WTC11 (cell line): ENCODE measurements at regions of chr11 and their contacts with region 1.

Region 1: GRCh38 chr11:32231905-32232493 is 141.1 kb downstream of the RCN1 start:
- DNase-seq: peak; percentile 64
- ATAC-seq: peak; percentile 96
- H3K4me3 Mint-ChIP-seq: no peak overlapping the region
- H3K27ac Mint-ChIP-seq: no peak overlapping the region
- H3K4me1 Mint-ChIP-seq: no peaks in the 10 kb centered on the region
- H3K27me3 Mint-ChIP-seq: no peaks in the 10 kb centered on the region
- CTCF ChIP-seq: peak; percentile 56

Region 2: GRCh38 chr11:32154275-32154674 is 77.7 kb before region 1 on chr11:
- CTCF ChIA-PET with region 1: no interaction called
- POLR2A ChIA-PET with region 1: no interaction called
- DNase-seq: no peak
- ATAC-seq: peak; percentile 28
- H3K4me3 Mint-ChIP-seq: no peak overlapping the region
- H3K27ac Mint-ChIP-seq: no peak overlapping the region
- H3K4me1 Mint-ChIP-seq: peaks cover 3% of the 10 kb centered on the region
- H3K27me3 Mint-ChIP-seq: peaks cover 2% of the 10 kb centered on the region
- CTCF ChIP-seq: no peak

Region 3: GRCh38 chr11:32176223-32176934 is 55.6 kb before region 1 on chr11:
- CTCF ChIA-PET with region 1: interaction called, 16 read pairs
- POLR2A ChIA-PET with region 1: no interaction called
- DNase-seq: peak; percentile 88
- ATAC-seq: peak; percentile 65
- H3K4me3 Mint-ChIP-seq: no peak overlapping the region
- H3K27ac Mint-ChIP-seq: no peak overlapping the region
- H3K4me1 Mint-ChIP-seq: peaks cover 15% of the 10 kb centered on the region
- H3K27me3 Mint-ChIP-seq: no peaks in the 10 kb centered on the region
- CTCF ChIP-seq: peak; percentile 84

Region 4: DNA sequence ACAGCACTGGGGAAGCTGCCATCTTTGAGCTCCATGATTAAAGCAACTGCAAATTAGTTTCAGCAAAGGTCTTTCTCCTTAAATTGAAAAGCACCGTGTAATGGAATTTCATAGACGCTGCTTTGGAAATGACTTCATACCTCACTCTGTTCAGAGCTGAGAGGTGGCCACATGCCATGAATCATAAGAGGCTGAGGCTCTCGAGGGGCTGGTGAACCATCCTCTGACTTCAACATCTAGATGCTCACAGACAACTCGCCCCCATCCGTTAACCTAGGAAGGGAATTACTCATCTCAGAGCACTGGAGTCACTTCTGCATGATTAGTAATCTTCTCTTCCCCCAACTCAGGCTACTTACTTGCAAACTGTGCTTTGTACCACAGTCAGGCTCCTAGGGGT is 18.8 kb before region 1 on chr11:
- CTCF ChIA-PET with region 1: interaction called, 10 read pairs
- POLR2A ChIA-PET with region 1: no interaction called
- DNase-seq: no peak
- ATAC-seq: no peak
- H3K4me3 Mint-ChIP-seq: no peak overlapping the region
- H3K27ac Mint-ChIP-seq: no peak overlapping the region
- H3K4me1 Mint-ChIP-seq: no peaks in the 10 kb centered on the region
- H3K27me3 Mint-ChIP-seq: no peaks in the 10 kb centered on the region; the same call in 1 of the 2 replicates
- CTCF ChIP-seq: no peak

Region 5: GRCh38 chr11:32244453-32244852 is 12.5 kb after region 1 on chr11:
- CTCF ChIA-PET with region 1: interaction called, 33 read pairs
- POLR2A ChIA-PET with region 1: no interaction called
- DNase-seq: no peak
- ATAC-seq: no peak
- H3K4me3 Mint-ChIP-seq: no peak overlapping the region
- H3K27ac Mint-ChIP-seq: no peak overlapping the region
- H3K4me1 Mint-ChIP-seq: peaks cover 15% of the 10 kb centered on the region
- H3K27me3 Mint-ChIP-seq: no peaks in the 10 kb centered on the region
- CTCF ChIP-seq: no peak

Region 6: DNA sequence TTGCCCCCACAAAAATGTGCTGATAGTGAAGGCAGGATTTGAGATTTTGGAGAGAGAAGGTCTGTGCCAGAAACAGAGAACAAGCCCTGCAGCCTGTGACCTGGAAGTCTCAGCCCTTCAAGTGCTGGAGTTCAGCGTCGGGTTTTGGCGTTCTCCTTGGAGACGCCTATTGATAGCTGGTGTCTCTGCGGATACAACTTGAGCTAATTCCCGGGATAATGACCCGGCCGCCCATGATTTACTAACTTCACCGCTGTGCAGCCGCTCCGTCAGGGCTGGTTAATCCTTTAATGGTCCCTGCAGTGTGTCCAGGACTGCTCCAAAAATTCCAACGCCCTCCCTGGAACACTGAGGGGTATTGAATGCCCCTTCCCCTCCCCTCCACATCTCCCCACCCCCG is 126.7 kb after region 1 on chr11:
- CTCF ChIA-PET with region 1: no interaction called
- POLR2A ChIA-PET with region 1: no interaction called
- DNase-seq: no peak
- ATAC-seq: no peak
- H3K4me3 Mint-ChIP-seq: no peak overlapping the region
- H3K27ac Mint-ChIP-seq: no peak overlapping the region
- H3K4me1 Mint-ChIP-seq: no peaks in the 10 kb centered on the region
- H3K27me3 Mint-ChIP-seq: no peaks in the 10 kb centered on the region
- CTCF ChIP-seq: no peak